ENCODE measurements at regions of chr11 and their contacts with region 1.

Region 1: GRCh38 chr11:109939166-109939810 is 153.9 kb upstream of the ZC3H12C start:
- H3K4me3 ChIP-seq: no peak overlapping the region
- H3K27ac ChIP-seq: no peak overlapping the region
- H3K4me1 ChIP-seq: no peaks in the 10 kb centered on the region
- CTCF ChIP-seq: peak; percentile 36; the same call in 1 of the 2 replicates

Region 2: DNA sequence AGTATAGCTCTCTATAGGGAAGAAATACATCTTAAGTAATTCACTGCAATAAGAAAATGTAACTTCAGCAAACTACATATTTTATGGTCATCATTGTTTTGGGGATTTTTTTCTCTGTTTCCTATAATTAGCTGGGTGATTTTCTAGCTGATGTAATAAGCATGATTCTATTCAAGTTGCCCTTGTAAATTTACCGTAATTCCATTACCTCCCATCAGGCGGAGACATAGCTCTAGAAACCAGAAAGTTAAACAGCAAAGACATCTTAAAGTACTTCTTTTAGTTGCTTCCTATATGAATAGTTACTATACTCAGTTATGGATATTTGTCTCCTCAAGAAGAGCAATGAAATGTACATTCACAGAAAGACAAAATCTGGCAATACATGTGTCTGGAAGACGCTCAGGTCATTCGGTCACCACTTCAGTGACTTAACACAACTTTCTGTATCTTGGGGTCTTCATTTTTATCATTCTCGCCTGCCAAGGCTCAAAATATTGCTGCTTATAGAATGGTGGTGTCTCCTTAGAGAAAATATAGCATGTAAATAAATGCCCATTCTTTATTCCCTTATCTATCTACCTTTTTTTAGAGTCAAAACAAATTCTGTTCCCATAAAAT is 86.0 kb before region 1 on chr11:
- CTCF ChIA-PET with region 1: interaction called, 71 read pairs
- POLR2A ChIA-PET with region 1: no interaction called
- H3K4me3 ChIP-seq: no peak overlapping the region
- H3K27ac ChIP-seq: no peak overlapping the region
- H3K4me1 ChIP-seq: no peaks in the 10 kb centered on the region
- CTCF ChIP-seq: no peak

Region 3: DNA sequence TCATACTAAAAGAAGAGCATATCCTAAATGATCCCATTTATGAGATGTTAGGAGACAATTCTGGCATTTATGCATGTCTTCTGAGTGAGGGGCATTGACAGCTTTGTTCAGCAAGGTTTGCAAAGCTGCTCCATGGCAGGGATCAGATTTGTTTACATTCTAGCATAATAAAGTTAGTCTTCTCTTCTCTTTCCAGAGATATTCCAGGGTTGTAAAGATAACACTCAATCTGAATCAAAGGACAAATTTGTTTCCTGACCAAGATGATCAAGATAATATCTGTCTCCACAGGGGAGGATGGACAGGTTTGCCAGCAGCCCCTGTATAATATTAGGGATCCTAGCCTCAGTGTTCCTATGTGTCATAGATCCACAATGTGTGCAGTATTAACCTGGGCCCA is 76.4 kb after region 1 on chr11:
- CTCF ChIA-PET with region 1: no interaction called
- POLR2A ChIA-PET with region 1: no interaction called
- H3K4me3 ChIP-seq: no peak overlapping the region
- H3K27ac ChIP-seq: no peak overlapping the region
- H3K4me1 ChIP-seq: no peaks in the 10 kb centered on the region
- CTCF ChIP-seq: no peak

Measured in HEK293 (cell line).